Activated CD4-positive, alpha-beta T cell treated with anti-CD3 and anti-CD28 coated beads for 36 hours (primary cell): ENCODE measurements at regions of chr9 and their contacts with region 1.

Region 1: DNA sequence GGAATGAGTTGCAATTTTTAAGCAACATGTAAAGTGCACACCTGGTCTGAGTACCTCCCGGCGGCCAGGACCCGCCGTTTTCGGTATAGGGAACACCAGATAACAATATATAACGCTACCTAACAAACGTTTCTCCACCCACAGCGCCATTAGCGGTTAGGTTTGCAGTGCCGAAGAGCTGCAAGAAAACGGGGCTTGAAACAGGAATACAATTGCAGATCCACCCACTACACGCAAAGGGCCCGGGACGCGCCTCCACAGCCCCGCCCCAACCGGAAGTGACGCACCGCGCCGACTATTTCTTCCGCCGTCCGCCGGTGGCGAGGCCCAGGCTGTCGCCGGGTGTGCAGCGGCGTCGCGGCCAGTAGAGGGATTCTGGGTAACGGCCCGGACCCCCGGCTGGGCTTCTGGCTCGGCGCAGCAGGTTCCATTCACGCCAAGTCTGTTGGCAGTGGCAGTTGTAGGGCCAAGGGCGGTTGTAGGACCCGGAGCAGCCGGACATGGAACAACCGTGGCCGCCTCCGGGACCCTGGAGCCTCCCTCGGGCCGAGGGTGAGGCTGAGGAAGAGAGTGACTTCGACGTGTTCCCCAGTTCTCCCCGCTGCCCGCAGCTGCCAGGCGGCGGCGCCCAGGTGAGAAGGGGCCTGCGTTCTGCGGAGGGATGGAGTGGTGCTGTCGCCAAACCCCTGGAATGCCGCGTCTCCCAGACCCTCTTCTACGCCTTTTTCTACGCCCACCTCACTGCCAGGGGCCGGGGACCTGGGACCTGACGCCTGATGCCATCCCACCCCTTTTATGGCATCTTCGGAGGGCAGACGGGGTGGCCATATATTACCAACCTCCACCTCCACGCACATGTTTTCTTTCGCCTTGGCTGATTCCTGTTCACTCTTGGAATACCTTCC is at the start of gene CDC37L1:
- DNase-seq: peak; percentile 99
- ATAC-seq: peak; percentile 95
- H3K4me3 Mint-ChIP-seq: no peak within 1 kb of the TSS
- H3K27ac Mint-ChIP-seq: no peak within 1 kb of the TSS
- H3K4me1 Mint-ChIP-seq: peaks cover 11% of the 10 kb centered on the region
- H3K27me3 Mint-ChIP-seq: no peaks in the 10 kb centered on the region
- total RNA-seq, gene CDC37L1: 8.0 to 9.8 TPM

Region 2: GRCh38 chr9:3746296-3747275 is 932.9 kb before region 1 on chr9:
- CTCF ChIA-PET with region 1: no interaction called
- POLR2A ChIA-PET with region 1: no interaction called
- intact Hi-C with region 1: loop called in 1 of 2 experiments (anchors 10 kb)
- DNase-seq: peak; percentile 72
- ATAC-seq: peak; percentile 97
- H3K4me3 Mint-ChIP-seq: no peak overlapping the region
- H3K27ac Mint-ChIP-seq: peak overlapping the region; percentile 81
- H3K4me1 Mint-ChIP-seq: peaks cover 32% of the 10 kb centered on the region
- H3K27me3 Mint-ChIP-seq: peaks cover 7% of the 10 kb centered on the region

Region 3: GRCh38 chr9:4662108-4662988 is 17.2 kb before region 1 on chr9 and contains the start of gene PLPP6:
- CTCF ChIA-PET with region 1: interaction called, 6 read pairs
- POLR2A ChIA-PET with region 1: interaction called, 7 read pairs
- intact Hi-C with region 1: loop called (anchors 1 kb)
- DNase-seq: peak; percentile 87
- ATAC-seq: peak; percentile 84
- H3K4me3 Mint-ChIP-seq: peak within 1 kb of the TSS; percentile 82
- H3K27ac Mint-ChIP-seq: peak within 1 kb of the TSS; percentile 86
- H3K4me1 Mint-ChIP-seq: peaks cover 53% of the 10 kb centered on the region
- H3K27me3 Mint-ChIP-seq: no peaks in the 10 kb centered on the region
- total RNA-seq, gene PLPP6: 4.3 to 5.0 TPM

Region 4: DNA sequence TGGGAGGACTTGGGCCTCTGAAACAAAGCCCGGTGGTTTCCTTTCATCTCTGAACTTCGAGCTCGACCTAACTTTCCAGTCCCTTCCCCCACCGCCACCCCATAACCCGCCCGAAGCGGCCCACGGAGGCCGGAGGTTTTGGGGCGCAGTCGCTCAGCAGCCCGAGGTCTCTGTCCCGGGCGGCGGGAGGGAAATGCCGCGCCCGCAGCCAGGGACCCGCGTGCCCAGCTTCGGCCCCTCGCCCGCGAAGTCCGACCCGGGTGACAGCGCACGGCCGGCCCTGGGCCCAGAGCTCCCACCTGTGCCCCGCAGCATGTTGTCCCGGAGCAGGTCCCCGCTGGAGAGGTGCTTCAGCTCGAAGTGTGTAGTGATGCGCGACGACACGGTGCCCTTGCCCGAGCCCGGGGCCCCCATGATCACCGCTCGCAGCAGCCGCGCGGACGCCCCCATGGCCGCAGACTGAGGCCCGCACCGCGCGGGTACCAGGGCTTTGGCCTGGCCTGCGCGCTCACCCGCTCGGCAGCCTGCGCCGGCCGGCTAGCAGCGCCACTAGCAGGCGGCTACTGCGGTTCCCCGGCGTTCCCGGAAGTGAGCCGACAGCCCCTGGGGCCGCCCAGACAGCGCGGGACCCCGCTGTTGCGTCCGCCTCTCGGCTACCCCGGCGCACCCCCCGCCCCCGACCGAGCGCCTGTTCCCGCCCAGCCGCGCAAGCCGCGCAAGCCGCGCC is 61.3 kb after region 1 on chr9 and contains the start of gene AK3:
- CTCF ChIA-PET with region 1: interaction called, 5 read pairs
- POLR2A ChIA-PET with region 1: interaction called, 5 read pairs
- intact Hi-C with region 1: loop called (anchors 1 kb)
- DNase-seq: peak; percentile 91
- ATAC-seq: peak; percentile 87
- H3K4me3 Mint-ChIP-seq: peak within 1 kb of the TSS; percentile 88
- H3K27ac Mint-ChIP-seq: peak within 1 kb of the TSS; percentile 93
- H3K4me1 Mint-ChIP-seq: peaks cover 40% of the 10 kb centered on the region
- H3K27me3 Mint-ChIP-seq: no peaks in the 10 kb centered on the region
- total RNA-seq, gene AK3: 32.6 to 41.0 TPM

Region 5: DNA sequence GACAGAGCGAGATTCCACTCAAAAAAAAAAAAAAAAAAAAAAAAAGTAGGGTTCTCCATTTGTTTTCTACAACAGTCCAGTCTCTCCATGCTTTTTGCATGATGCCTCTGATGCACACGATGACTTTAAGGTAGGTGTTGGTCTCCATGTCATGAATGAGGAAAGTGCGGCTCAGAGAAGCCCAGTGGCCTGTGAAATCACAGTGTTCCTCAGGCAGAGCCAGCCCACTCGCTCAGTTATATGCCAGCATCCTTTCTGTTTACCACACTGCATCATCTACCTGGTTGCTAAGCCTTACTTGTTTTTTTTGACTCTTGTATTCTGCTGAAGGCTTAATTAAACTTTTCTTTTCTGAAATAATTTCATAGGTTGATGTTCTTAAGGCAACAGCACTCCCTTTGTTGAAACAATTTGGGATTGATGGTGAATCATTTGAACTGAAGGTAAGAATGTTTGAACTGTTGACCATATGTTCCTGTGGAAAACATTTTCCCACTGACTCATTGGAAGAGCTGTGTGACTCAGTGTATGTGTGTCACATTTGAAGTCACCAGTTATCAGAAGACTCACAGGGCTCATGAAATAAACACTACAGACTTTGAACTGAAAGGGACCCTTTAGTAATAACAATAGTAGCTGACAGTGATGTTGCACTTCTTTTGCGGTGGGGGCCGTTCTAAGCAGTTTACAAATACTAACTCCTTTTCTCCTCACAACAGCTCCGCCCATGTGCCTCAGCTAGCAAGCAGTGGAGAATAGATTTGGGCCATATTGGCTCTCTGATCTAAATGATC is 153.5 kb after region 1 on chr9:
- CTCF ChIA-PET with region 1: no interaction called
- POLR2A ChIA-PET with region 1: no interaction called
- intact Hi-C with region 1: loop called in 1 of 2 experiments (anchors 5 kb)
- DNase-seq: peak; percentile 81
- ATAC-seq: peak; percentile 94
- H3K4me3 Mint-ChIP-seq: peak overlapping the region; percentile 16
- H3K27ac Mint-ChIP-seq: peak overlapping the region; percentile 84
- H3K4me1 Mint-ChIP-seq: peaks cover 45% of the 10 kb centered on the region
- H3K27me3 Mint-ChIP-seq: no peaks in the 10 kb centered on the region

Region 6: GRCh38 chr9:4955836-4956235 is 276.3 kb after region 1 on chr9:
- CTCF ChIA-PET with region 1: no interaction called
- POLR2A ChIA-PET with region 1: no interaction called
- intact Hi-C with region 1: no loop called
- DNase-seq: no peak
- ATAC-seq: no peak
- H3K4me3 Mint-ChIP-seq: no peak overlapping the region
- H3K27ac Mint-ChIP-seq: no peak overlapping the region
- H3K4me1 Mint-ChIP-seq: no peaks in the 10 kb centered on the region
- H3K27me3 Mint-ChIP-seq: peaks cover 2% of the 10 kb centered on the region

Region 7: DNA sequence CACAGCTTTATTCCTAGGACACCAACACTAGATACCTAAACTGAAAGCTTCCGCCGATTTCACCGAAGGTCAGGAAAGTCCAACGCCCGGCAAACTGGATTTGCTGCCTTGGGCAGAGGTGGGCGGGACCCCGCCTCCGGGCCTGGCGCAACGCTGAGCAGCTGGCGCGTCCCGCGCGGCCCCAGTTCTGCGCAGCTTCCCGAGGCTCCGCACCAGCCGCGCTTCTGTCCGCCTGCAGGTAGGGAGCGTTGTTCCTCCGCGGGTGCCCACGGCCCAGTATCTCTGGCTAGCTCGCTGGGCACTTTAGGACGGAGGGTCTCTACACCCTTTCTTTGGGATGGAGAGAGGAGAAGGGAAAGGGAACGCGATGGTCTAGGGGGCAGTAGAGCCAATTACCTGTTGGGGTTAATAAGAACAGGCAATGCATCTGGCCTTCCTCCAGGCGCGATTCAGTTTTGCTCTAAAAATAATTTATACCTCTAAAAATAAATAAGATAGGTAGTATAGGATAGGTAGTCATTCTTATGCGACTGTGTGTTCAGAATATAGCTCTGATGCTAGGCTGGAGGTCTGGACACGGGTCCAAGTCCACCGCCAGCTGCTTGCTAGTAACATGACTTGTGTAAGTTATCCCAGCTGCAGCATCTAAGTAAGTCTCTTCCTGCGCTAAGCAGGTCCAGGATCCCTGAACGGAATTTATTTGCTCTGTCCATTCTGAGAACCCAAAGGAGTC is 771.0 kb after region 1 on chr9 and contains the start of gene CD274:
- CTCF ChIA-PET with region 1: no interaction called
- POLR2A ChIA-PET with region 1: no interaction called
- intact Hi-C with region 1: loop called (anchors 1 to 10 kb)
- DNase-seq: peak; percentile 94
- ATAC-seq: peak; percentile 66
- H3K4me3 Mint-ChIP-seq: peak within 1 kb of the TSS; percentile 98
- H3K27ac Mint-ChIP-seq: peak within 1 kb of the TSS; percentile 90
- H3K4me1 Mint-ChIP-seq: peaks cover 77% of the 10 kb centered on the region
- H3K27me3 Mint-ChIP-seq: no peaks in the 10 kb centered on the region
- total RNA-seq, gene CD274: 25.0 to 30.1 TPM